Activated CD8-positive, alpha-beta T cell treated with anti-CD3 and anti-CD28 coated beads for 36 hours (primary cell): ENCODE measurements at regions of chr5 and their contacts with region 1.

Region 1: DNA sequence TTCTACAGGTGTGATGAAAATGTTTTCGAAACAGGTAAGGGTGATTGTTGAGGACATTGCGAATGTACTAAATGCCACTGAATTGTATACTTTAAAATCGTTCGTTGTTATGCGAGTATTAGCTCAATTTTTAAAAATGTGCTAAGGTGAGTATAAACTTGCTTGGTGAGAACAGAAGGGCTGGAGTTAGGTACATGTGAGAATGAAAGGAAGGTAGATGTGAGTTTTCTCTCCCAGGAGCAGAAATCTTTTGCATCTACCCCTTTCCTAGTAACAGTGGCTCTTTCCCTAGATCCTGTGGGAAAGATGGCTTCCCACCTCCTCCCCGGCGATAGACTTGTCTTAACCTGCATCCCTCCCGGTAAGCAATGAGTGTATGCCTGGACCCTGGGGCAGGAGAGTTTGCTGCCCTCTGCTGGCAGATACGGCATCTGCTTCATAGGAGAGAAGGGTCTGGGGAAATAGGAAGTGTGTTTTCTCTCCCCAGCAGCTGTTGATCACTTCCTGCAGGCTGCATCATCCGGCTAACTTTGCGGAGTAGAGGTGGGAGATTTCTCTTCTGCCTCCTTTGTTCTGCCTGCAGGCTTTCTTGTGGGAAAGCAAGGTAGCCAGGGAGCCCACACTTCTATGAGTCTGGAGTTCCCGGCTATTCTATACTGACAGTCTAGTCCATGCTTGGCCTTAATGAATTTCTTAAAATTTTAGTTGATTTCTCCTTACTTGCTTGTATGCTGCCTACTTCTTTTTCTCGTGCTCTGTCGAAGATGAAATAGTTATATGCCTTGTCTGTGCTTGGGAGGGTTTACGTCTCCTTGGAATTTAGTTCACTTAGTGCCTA is 373.3 kb upstream of the SEMA6A start:
- DNase-seq: peak; percentile 74
- ATAC-seq: peak; percentile 84
- H3K4me3 Mint-ChIP-seq: no peak overlapping the region
- H3K27ac Mint-ChIP-seq: no peak overlapping the region
- H3K4me1 Mint-ChIP-seq: peaks cover 3% of the 10 kb centered on the region
- H3K27me3 Mint-ChIP-seq: peaks cover 4% of the 10 kb centered on the region
- CTCF ChIP-seq: peak; percentile 65

Region 2: DNA sequence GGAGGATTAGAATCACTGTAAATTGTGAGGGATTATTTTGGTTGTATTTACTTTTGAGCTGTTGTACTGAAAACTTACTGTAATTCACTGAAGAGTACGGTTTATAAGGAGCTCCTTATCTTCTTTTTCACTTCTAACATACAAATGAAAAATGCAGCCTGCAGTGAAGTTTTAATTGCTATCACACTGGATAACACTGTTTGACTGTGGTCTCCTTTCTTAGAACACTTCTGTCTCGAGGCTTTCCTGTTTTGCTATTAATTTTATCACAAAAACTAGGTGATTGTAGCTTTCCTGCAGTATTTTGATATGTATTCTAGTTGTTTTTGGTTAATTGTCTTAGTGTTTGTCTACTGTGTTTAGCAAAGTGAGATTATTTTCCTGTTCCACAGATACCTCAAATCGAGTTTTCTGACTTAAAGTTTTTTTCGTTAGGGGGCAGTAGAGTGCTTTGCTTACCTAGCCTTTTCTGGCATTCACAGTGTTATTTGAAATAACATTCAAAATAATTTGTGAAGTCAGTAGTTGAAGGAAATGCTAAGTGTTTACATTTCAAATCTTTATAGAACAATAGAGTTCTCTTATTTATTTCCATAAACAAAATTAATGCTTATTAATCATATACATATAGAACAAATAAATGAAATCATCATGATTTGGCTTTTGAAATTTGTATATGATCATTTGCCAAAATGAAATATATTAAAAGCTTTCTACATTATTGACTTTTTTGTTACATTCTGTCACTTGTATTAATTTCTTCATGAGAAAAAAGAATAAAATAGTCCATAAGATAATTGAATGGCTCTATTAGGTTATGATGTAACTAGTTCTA is 810.1 kb before region 1 on chr5:
- CTCF ChIA-PET with region 1: interaction called, 12 read pairs
- POLR2A ChIA-PET with region 1: no interaction called
- intact Hi-C with region 1: loop called (anchors 5 kb)
- DNase-seq: no peak
- ATAC-seq: peak; percentile 54
- H3K4me3 Mint-ChIP-seq: no peak overlapping the region
- H3K27ac Mint-ChIP-seq: no peak overlapping the region
- H3K4me1 Mint-ChIP-seq: peaks cover 19% of the 10 kb centered on the region
- H3K27me3 Mint-ChIP-seq: no peaks in the 10 kb centered on the region
- CTCF ChIP-seq: peak; percentile 94

Region 3: DNA sequence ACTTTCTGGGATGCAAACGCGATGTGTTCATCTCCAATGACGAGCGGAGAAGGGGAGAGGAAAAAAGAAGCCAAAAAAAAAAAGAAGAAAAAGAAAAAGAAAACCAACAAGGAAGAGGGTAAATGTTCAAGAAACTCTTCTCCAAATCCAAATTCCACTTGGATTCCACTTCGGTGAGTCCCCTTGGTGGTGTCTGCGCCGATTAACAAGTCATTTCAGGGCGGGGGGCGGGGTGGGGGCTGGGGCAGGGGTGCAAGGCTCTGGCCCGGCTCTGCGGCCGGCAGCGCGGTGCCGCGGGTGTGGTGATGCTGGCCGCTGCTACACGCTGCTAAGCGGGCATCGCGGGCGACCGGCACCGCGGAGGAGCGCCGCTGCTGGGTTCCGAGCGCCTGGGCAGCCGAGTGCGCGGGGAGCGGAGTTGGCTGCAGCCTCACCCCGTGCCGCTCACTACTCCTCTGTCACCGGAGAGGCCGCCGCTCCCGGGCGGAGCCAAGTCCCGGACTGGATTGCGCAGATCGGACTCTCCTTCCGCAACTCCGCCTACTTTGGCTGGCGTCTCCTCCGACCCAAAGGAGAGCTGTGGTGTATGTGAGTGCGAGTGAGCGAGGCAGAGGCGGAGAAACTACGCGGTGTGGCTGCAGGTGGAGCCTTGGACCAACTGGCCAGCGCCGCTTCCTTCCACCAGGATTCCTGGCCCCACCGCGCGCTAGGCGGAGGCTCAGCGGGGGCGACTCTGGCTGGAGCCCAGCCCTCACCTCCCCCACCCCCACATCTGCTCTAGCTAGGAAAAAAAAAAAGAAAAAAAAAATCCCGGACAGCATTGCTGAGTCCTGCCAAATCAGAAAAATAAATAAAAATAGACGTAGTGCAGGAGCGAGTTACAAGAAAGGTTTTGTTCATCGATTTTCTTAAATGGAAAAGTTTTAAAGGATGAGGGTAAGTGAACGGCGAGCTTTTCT is 373.3 kb before region 1 on chr5 and contains the start of gene SEMA6A:
- CTCF ChIA-PET with region 1: interaction called, 7 read pairs
- POLR2A ChIA-PET with region 1: no interaction called
- intact Hi-C with region 1: loop called (anchors 5 kb)
- DNase-seq: peak; percentile 74
- ATAC-seq: peak; percentile 74
- H3K4me3 Mint-ChIP-seq: peak within 1 kb of the TSS; percentile 62
- H3K27ac Mint-ChIP-seq: no peak within 1 kb of the TSS
- H3K4me1 Mint-ChIP-seq: peaks cover 27% of the 10 kb centered on the region
- H3K27me3 Mint-ChIP-seq: peaks cover 68% of the 10 kb centered on the region
- CTCF ChIP-seq: no peak
- total RNA-seq, gene SEMA6A: not detected

Region 4: DNA sequence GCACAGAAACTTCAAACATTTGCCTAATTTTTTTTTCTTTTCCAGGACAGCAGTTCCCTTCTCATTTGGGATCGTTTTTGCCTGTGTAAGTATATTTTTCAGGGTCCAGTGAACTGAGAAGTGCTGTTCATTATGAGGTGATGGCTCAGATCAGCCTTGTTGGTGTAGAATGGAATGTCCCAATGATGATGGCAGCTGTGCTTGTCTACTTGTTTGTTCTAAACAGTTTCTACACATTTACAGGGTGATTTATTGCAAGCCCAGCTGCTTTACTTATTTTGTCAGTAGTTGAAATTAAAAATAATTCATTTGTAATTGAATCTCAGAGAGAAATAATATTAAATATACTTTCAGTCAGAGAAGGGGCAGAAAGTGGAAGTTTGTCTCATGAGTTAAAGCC is 35.7 kb before region 1 on chr5:
- CTCF ChIA-PET with region 1: no interaction called
- POLR2A ChIA-PET with region 1: no interaction called
- intact Hi-C with region 1: no loop called
- DNase-seq: no peak
- ATAC-seq: no peak
- H3K4me3 Mint-ChIP-seq: no peak overlapping the region
- H3K27ac Mint-ChIP-seq: no peak overlapping the region
- H3K4me1 Mint-ChIP-seq: no peaks in the 10 kb centered on the region
- H3K27me3 Mint-ChIP-seq: no peaks in the 10 kb centered on the region
- CTCF ChIP-seq: no peak

Region 5: GRCh38 chr5:116982035-116982434 is 34.1 kb after region 1 on chr5:
- CTCF ChIA-PET with region 1: no interaction called
- POLR2A ChIA-PET with region 1: no interaction called
- intact Hi-C with region 1: no loop called
- DNase-seq: no peak
- ATAC-seq: no peak
- H3K4me3 Mint-ChIP-seq: no peak overlapping the region
- H3K27ac Mint-ChIP-seq: no peak overlapping the region
- H3K4me1 Mint-ChIP-seq: no peaks in the 10 kb centered on the region
- H3K27me3 Mint-ChIP-seq: no peaks in the 10 kb centered on the region
- CTCF ChIP-seq: no peak